Left cardiac atrium (tissue), 4 donors: ENCODE measurements at regions of chr1 and their contacts with region 1.

Region 1: GRCh38 chr1:15885701-15886610 is 38.4 kb downstream of the SPEN start:
- DNase-seq: peak; percentile 98
- ATAC-seq: peak; percentile 98 to 99

Region 2: DNA sequence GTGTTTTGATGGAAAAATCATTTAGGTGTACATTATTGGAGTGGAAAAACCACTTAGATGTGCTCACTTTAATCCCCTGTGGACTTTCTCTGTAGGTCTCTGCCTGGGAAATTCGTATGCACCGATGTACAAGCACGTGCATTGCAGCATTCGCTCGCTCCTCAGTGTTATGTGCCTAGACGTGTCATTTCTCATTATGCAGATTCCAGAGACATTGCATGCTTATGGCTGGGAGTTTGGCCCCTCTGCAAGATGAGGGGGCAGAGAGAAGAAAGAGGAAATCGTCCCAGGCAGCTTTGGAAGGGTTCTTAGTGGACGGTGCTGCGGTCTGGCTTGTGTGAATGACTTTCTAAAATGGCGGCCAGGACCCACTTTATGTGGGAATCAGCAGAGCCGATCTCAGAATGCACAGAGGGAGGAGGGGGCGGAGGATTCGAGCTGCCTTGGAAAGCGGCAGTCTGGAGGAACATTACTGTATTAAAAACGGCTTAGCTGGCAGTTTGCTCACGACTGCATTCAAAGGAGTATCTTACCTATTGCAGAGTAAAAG is 36.1 kb before region 1 on chr1:
- intact Hi-C with region 1: loop called (anchors 5 kb)
- DNase-seq: peak; percentile 39
- ATAC-seq: peak in 1 of 2 donors; percentile 10

Region 3: DNA sequence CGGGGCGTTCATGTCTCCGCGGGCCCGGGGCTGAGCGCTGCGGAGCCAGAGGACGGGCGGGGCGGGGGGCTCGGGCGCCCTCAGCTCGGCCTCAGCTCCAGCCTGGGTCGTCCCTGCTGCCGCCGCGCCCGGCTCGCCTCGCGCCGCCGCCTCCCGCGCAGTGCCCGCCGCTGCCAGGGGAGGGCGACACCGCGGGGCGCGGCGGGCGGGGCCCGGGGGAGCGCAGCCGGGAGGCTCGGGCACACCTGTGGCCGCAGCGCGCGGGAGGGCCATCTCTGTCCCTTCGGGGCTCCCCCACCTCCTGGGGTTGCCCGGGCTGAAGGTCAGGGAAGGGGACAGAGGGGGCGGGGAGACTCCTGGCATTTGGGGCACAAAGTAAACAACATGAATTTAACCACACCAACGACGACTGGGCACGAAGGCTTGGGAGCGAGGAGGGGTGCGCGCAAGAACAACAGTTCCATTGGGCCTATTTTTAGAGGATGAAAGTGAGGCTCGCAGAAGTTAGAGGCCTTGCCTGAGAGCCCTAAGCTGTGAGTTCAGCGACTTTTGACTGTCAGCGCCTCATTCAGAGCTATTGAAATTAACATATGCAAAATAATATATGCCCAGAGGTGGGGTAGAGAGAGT is 187.6 kb after region 1 on chr1 and contains the start of gene FAM131C:
- intact Hi-C with region 1: no loop called
- DNase-seq: no peak
- ATAC-seq: peak; percentile 4 to 49
- total RNA-seq, gene FAM131C: 3.2 to 6.5 TPM